ENCODE measurements at regions of chr3 and their contacts with region 1.

Region 1: DNA sequence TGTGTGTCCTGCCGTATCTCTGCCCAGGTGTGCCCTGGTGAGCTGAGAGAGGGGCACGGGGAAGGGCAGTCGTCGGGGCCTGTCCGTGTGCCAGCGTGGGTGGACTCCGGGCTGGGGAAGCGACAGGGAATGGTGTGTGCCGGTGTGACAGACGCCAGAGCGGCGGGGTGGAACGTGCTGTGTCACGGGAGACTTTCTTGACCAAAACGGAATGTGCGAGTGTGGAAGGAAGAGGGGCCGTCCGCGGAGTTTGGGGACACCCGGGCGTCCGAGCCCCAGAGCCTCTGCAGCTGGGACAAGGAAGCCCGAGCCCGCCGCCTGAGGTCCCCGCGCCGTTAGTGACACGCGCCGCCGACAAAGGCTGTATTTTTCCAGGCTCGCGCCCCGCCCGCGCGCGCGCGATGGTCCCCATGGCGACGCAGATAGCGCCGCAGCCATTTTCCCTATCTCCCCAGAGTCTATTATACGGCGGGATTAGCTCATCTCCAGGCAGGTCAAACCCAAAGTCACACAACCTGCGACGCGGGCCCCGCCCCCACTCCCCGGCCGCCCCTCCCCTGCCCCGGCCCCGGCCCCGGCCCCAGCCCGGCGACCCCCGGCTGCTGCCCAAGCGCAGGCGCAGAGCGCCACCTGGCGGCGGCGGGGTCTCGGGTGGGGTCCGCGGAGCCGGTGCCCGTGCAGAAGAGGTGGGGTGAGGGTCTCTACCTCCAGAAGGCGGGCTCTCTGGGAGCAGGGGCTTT is 4.6 kb upstream of the GATA2 start:
- DNase-seq: no peak
- H3K4me3 ChIP-seq: peak overlapping the region; percentile 57
- CTCF ChIP-seq: peak; percentile 79

Region 2: DNA sequence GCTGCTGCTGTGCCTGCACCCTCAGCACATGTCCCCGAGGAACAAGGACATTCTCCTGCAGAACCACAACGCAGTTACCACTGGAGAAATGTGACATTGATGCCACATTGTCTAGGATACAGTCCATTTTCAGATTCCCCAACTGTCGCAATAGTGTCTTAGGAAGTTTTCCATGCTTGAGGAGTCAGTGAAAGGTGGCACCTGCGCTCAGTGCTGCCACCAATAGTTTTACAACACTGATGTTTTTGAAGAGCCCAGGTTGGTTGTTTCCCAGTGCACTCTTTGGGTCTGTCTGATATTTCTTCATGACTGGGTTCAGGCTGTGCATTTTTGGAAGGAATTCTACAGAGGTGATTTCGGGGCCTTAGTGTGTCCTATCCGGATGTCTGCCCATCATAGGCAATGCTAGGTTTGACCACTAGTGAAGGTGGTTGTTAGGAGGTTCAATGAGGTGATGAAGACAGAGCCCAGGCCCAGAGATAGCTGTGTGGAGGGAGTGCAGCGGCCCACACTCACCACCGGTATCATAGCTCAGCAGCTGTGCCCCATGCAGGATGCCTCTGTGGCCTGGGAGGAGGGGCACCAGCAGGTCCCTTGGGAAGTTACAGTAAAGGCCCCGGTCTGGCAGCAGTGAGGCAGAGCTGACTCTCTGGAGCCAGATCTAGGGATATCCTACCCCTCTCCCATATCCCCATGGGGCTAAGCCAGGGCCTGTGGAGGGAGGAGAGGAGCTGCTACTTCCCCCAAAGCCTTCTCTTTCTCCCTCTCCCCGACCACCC is 127.5 kb before region 1 on chr3:
- CTCF ChIA-PET with region 1: no interaction called
- POLR2A ChIA-PET with region 1: no interaction called
- DNase-seq: no peak
- H3K4me3 ChIP-seq: no peak overlapping the region
- CTCF ChIP-seq: no peak

Region 3: DNA sequence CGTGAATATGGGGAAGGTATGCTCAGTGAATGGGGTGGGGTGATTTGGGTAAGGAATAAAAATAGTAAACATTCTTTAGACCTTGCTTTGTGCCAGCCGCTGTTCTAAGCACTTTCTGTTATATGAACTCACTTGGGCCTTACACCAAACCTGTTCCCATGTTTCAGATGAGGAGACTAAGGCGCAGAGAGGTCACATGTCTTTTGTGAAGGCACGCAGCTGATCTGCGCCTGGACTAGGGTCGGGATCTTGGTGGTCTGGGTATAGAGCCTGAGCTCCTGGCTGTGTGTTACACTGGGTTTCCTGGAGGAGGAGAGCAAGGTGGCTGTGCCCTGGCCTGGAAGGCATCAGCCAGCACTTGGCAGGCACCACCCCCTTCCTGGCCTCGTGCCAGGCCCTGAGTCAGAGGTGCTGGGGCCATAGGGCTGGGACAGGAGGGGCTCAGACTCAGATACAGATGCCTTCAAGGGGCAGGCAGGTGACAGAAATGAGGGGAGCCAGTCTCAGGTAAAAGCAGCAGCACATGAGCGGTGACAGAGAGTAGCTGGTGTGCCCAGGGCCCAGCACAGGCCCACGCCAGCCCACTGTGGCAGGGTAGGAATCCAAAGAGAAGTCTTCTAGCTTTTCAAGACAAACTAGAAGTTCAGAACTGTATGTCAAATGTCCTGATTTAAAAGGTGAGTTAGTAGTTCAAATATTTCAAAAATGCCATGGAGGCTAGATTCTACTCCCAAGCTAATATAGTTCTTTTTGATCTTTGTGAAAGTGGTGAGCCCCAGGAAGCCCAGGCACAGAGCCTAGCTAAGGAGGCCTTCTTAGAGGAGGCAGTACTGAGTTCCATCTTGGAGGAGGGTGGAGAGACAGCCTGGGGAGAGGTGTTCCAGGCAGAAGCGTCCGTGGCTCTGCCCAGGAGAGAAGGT is 114.0 kb before region 1 on chr3:
- CTCF ChIA-PET with region 1: no interaction called
- POLR2A ChIA-PET with region 1: no interaction called
- DNase-seq: no peak
- H3K4me3 ChIP-seq: no peak overlapping the region
- CTCF ChIP-seq: no peak

Region 4: DNA sequence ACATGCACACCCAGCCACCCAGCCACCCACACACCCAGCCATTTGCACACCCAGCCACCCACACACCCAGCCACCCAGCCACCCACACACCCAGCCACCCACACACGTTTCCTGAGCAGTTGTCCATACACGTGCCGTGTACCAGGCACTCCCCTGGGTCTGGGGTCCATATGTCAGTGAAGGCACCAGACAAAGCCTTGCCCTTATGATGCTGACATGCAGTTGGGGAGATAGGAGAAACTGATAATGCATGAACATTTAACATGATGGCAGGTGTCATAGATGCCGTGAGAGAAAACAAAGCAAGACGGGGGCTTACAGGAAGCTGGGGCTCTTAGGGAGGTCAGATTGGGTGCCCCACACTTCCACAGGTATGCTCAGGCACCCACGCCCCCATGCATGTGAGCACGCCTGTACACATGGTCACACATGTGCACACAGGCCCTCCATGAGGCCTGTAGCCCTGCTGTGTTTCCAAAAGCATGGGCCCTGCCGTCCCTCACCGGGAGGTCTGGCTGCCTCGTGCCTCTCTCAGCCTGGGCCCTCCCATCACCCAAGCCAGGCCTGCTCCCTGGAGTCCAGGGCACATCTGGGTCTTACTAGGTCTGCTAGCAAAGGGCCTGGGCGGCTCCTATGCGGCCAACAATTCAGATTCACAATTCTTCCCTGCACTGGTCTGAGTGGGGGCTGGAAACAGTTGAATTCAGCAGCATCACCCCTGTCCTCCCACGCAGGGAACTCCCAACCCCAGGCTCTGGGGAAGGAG is 27.2 kb before region 1 on chr3:
- CTCF ChIA-PET with region 1: no interaction called
- POLR2A ChIA-PET with region 1: no interaction called
- DNase-seq: no peak
- H3K4me3 ChIP-seq: no peak overlapping the region
- CTCF ChIP-seq: no peak

Region 5: DNA sequence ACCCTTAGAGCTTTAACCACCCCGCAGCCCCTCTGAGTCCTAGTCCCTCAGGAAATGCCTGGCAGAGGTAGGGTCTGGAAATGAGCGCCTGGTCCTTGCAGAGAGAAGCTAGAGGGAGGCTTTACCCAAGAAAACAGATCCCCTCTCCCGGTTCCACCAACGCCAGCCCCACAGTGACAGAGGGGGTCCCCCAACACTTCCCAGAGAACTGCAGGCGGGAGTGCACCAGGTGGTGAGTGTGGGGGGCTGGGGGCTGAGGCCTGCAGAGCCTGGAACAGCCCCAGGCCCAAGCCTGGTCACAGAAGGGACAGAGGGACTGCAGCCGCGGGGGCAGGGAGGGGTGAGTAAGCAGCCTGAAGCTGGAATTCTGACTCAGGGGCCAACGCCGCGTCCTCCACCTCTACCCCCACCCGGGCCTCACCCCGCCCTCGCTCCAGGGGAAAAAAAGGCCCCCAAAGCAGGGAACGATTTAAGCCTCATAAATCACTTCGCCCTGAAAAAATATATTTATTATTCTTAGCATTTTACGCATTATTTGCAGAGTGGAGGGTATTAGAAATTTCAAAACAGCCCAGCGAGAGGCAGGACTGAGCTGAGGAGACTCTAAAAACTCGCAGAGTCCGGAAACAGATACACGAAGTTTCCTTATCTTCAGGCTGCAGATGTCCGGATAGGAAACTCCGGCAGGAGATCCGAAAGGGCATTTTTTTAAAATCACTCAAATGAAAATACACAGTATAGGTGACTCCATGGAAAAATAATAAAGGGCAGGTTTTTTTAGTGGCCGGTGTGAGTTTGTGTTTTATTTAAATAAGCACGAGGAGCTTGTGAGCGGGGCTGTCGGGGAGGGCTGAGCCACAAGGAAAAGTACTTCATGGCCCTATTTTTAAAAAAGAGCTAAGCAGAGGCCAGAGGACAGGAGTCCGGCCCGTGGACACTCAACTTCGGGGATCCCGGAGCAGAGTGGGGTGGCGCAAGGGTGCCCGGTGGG is 14.6 kb before region 1 on chr3:
- CTCF ChIA-PET with region 1: interaction called, 16 read pairs
- POLR2A ChIA-PET with region 1: interaction called, 4 read pairs
- DNase-seq: peak; percentile 36
- H3K4me3 ChIP-seq: peak overlapping the region; percentile 26
- CTCF ChIP-seq: no peak

Region 6: DNA sequence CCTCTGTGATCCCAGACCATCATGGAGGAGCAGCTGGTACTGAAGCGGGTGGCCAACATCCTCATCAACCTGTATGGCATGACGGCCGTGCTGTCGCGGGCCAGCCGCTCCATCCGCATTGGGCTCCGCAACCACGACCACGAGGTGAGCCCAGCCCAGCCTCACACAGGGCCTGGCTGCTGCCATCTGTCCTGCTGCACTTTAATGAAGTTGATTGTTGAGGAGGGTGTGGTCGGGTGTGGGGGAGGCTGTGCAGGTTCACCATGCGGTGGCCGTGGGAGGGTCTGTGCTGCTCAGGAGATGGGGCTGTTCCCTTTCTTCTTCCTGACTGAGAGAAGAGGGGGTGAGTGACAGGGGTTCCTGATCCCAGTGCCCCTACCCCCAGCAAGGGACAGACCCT is 412.4 kb after region 1 on chr3:
- CTCF ChIA-PET with region 1: no interaction called
- POLR2A ChIA-PET with region 1: no interaction called
- DNase-seq: no peak
- H3K4me3 ChIP-seq: no peak overlapping the region
- CTCF ChIP-seq: no peak